PC-9 (cell line): ENCODE measurements at regions of chr2 and their contacts with region 1.

Region 1: GRCh38 chr2:121088251-121089165 is 196.5 kb downstream of the TFCP2L1 start:
- DNase-seq: no peak
- H3K4me3 ChIP-seq: no peak overlapping the region
- H3K27ac ChIP-seq: no peak overlapping the region
- H3K4me1 ChIP-seq: peaks cover 6% of the 10 kb centered on the region; the same call in 1 of the 2 replicates
- H3K27me3 ChIP-seq: no peaks in the 10 kb centered on the region
- CTCF ChIP-seq: no peak

Region 2: GRCh38 chr2:121118951-121119555 is 30.5 kb after region 1 on chr2:
- CTCF ChIA-PET with region 1: no interaction called
- POLR2A ChIA-PET with region 1: no interaction called
- intact Hi-C with region 1: no loop called
- DNase-seq: no peak
- H3K4me3 ChIP-seq: no peak overlapping the region
- H3K27ac ChIP-seq: no peak overlapping the region
- H3K4me1 ChIP-seq: no peaks in the 10 kb centered on the region
- H3K27me3 ChIP-seq: peaks cover 16% of the 10 kb centered on the region; the same call in 1 of the 2 replicates
- CTCF ChIP-seq: no peak

Region 3: DNA sequence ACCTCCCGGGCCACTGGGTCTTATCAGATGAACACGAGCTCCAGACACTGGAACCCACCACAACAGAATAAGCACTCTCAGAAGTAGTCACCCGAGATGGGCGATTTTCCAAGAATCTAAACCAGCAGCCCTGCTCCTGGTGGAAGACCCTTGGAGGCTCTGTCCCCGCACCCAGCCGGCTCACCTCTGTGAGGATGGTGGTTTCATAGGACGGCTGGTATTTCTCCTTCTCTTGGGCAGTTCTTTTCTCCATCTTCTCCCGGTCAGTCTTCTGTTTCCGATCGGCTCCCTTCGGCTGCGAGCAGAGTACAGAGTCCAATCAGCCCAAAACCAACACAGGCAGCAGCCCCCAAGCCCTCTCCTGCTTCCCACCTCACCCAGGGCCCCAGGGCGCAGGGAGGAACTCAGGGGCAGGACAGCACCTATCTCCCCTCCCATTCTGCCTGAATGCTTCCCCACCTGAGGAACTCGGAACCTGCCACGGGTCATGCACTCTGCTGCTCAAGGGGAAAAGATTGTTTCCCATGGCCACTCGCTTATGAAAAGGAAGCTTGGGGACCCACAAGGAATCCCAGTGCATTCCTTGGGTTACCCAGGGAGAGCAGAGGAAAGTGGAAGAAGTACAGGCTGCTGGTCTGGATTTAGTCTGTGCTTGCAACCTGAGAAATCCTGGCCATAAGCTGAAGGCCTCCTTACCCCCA is 153.8 kb after region 1 on chr2:
- CTCF ChIA-PET with region 1: interaction called, 14 read pairs
- POLR2A ChIA-PET with region 1: no interaction called
- intact Hi-C with region 1: no loop called
- DNase-seq: no peak
- H3K4me3 ChIP-seq: no peak overlapping the region
- H3K27ac ChIP-seq: no peak overlapping the region
- H3K4me1 ChIP-seq: no peaks in the 10 kb centered on the region
- H3K27me3 ChIP-seq: no peaks in the 10 kb centered on the region
- CTCF ChIP-seq: no peak

Region 4: GRCh38 chr2:121356058-121356640 is 267.6 kb after region 1 on chr2:
- CTCF ChIA-PET with region 1: interaction called, 13 read pairs
- POLR2A ChIA-PET with region 1: interaction called, 4 read pairs
- intact Hi-C with region 1: no loop called
- DNase-seq: peak; percentile 56 to 72
- H3K4me3 ChIP-seq: no peak overlapping the region
- H3K27ac ChIP-seq: no peak overlapping the region
- H3K4me1 ChIP-seq: peaks cover 12% of the 10 kb centered on the region
- H3K27me3 ChIP-seq: no peaks in the 10 kb centered on the region
- CTCF ChIP-seq: peak; percentile 92

Region 5: DNA sequence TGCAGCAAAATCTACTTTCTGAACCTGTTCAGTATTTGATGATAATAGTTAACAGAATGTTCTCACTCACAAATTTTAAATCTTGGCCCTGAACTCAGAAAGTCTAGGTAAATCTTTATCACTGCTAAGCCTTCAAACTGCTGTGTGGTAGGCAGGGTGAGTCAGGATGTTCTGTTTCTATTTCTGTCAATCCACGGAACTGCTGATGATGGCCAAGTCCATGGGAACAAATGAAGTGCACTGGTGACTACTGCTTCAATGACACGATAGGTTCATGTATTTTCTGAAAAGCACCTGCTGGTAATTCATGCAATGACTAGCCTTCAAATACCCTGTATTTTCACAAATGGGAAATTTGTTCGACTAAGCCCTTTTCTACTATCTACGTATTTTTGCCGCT is 634.0 kb after region 1 on chr2:
- CTCF ChIA-PET with region 1: no interaction called
- POLR2A ChIA-PET with region 1: no interaction called
- intact Hi-C with region 1: loop called (anchors 1 kb)
- DNase-seq: peak in 1 of 2 experiments; percentile 70
- H3K4me3 ChIP-seq: no peak overlapping the region
- H3K27ac ChIP-seq: peak overlapping the region; percentile 42
- H3K4me1 ChIP-seq: peaks cover 13% of the 10 kb centered on the region; the same call in 1 of the 2 replicates
- H3K27me3 ChIP-seq: no peaks in the 10 kb centered on the region
- CTCF ChIP-seq: no peak